GM10248 (cell line): ENCODE measurements at regions of chr12 and their contacts with region 1.

Region 1: DNA sequence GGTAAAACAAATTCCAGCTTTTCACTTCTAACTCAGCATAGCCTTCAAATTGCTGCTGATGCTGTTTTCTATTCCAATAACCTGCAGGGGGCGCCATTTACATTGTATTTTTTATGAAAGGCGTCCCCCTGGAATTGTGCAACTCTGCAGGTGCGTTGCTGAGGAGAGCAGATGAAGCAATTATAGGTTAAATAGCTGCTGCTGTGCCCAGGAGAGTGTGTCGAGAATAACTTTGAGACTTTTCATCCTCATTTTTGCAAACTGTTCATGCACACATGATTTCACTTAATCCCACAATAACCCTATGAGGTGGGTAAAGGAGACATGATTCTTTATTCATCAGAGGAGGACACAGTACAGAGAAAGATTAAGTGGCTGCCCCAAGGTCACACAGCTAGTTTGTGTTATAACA is 75.7 kb downstream of the MYRFL start:
- DNase-seq: peak; percentile 29
- CTCF ChIP-seq: peak; percentile 79

Region 2: DNA sequence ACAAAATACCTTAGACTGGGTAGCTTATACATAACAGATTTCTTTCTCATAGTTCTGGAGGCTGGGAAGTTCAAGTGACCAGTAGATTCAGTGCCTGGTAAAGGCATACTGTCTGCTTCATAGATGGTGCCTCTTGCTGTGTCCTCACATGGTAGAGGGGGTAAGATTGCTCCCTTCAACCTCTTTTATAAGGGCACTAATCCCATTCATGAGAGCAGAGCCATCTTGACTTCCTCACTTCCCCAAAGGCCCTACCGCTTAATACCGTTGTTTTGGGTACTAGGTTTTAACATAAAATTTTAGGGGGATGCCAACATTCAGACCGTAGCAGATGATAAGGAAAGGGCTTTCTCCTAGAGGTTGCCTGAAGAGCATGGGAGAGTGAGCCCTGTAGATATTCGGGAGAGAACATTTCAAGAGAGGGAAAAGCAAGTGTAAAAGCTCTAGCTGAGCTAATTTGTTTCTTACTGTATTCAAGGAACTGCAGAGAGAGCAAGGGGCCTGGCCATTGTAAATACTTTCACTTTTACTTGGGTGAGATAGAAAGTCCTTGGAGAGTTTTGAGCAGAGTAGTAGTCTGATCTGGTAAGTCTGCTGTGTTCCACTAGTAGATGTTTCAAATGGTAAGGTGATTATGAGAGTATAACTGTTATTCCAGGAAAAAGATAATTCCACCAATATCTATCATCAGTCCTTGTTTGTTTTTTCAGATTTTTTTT is 403.3 kb before region 1 on chr12:
- CTCF ChIA-PET with region 1: no interaction called
- POLR2A ChIA-PET with region 1: no interaction called
- DNase-seq: peak; percentile 64
- CTCF ChIP-seq: no peak

Region 3: DNA sequence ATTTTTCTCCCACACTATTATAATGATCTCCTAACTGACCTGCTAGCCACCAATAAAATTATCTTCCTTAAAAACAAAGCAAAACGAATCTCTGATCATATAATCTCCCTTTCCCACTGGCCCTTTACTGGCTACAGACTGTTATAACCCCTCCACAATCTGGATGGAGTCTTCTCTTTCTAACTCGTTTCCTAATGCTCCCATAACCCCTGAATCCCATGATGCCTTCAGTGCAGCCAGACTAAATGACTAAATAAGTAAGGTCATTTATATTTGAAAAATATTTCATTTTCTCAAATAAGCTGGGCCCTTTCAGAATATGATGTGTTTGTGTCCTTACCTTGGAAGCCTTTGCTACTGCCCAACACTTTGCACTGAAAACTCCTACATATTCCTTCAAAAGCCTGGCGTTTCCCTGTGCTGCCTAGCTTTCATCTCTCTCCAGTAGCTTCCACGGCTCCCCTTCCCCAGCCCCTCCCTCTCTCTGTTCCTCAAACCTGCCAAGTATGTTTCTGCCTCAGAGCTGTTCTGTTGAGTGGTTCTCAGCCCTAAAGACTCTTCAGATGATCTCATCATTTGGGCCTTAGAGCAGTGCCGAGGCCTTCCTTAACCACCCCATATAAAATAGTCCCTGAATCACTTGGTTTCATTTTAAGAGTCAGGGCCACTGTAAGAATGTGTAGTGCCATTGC is 16.0 kb after region 1 on chr12:
- CTCF ChIA-PET with region 1: interaction called, 13 read pairs
- POLR2A ChIA-PET with region 1: no interaction called
- DNase-seq: no peak
- CTCF ChIP-seq: no peak

Region 4: DNA sequence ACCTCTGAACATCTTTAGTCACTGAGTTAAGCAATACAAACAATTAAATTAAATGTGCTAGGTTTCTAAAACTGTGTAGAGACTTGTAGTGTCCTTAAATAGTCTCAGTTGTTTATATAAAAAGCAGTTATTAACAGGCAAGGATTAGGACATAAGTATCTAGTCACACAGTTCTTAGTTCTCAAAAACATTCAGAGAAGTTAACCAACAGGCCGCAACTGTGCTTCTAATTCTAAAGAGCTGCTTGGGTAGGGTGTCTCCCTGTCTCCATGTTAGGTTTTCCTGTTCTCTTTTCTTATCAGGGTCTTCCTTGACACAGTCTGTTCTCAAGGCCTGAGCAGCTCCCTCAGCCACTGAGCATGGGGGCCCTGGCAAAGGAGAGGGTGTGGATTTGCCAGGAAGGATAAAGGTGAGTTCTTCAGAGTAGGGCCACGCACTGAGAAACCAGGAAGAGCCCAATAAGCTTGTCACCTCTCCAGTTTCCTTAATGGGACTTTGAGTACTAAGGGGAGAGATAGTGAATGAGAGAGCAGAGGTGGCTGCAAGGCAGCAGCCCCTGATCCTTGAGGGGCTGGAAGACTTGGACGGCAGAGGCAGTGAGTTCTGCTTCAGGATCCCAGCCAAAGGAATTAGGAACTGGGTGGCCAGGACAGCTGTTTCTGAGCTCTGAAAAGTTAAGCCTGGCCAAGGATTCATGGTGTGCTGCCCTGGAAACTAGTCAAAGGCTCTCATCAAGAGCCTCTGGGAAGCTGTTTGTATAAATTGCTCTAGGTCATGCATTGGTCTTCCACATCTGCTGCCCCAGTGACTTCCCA is 101.6 kb after region 1 on chr12:
- CTCF ChIA-PET with region 1: no interaction called
- POLR2A ChIA-PET with region 1: no interaction called
- DNase-seq: no peak
- CTCF ChIP-seq: no peak

Region 5: GRCh38 chr12:70106347-70106746 is 205.6 kb after region 1 on chr12:
- CTCF ChIA-PET with region 1: no interaction called
- POLR2A ChIA-PET with region 1: no interaction called
- DNase-seq: no peak
- CTCF ChIP-seq: no peak

Region 6: GRCh38 chr12:70576346-70577282 is 675.9 kb after region 1 on chr12:
- CTCF ChIA-PET with region 1: interaction called, 91 read pairs
- POLR2A ChIA-PET with region 1: no interaction called
- DNase-seq: peak; percentile 34
- CTCF ChIP-seq: peak; percentile 72